ENCODE measurements at regions of chr12 and their contacts with region 1.

Region 1: DNA sequence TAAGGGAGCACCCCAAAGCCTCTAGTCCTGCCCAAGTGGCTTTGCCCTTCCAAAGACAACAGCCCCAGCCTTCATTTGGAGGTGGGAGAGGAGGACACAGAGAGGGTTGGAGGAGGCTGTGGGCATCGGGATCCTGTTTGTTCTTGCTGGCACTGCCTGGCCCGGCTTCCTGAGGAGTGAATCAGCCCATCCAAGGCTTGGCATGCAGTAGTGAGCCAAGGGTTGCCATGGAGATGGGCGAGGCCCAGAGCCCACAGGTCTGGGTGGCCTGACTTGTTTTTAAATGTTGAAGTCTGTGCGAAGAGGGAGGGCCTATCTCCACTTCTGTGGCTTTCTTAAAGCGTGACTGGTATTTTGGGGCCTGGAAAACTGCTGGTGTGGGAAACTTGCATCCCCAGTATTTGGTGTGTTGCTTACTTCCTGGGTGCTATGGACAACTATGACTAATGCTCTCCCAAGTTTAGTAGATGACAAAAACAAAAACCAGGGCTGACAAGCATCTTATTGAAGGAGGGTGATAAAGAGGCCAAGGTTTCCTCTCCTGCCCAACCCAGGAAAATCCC is 15.8 kb downstream of the CD9 start:
- DNase-seq: peak; percentile 100
- H3K4me3 ChIP-seq: peak overlapping the region in 1 of 3 experiments; percentile 1
- H3K27ac ChIP-seq: peak overlapping the region; percentile 100
- H3K4me1 ChIP-seq: peaks cover 77% of the 10 kb centered on the region
- H3K27me3 ChIP-seq: no peaks in the 10 kb centered on the region
- CTCF ChIP-seq: no peak

Region 2: GRCh38 chr12:5965950-5966383 is 250.0 kb before region 1 on chr12:
- CTCF ChIA-PET with region 1: no interaction called
- dilution Hi-C with region 1: no loop called
- in situ Hi-C with region 1: no loop called
- intact Hi-C with region 1: no loop called
- DNase-seq: peak; percentile 27
- H3K4me3 ChIP-seq: no peak overlapping the region
- H3K27ac ChIP-seq: no peak overlapping the region
- H3K4me1 ChIP-seq: no peaks in the 10 kb centered on the region
- H3K27me3 ChIP-seq: no peaks in the 10 kb centered on the region
- CTCF ChIP-seq: peak; percentile 82 to 87

Region 3: DNA sequence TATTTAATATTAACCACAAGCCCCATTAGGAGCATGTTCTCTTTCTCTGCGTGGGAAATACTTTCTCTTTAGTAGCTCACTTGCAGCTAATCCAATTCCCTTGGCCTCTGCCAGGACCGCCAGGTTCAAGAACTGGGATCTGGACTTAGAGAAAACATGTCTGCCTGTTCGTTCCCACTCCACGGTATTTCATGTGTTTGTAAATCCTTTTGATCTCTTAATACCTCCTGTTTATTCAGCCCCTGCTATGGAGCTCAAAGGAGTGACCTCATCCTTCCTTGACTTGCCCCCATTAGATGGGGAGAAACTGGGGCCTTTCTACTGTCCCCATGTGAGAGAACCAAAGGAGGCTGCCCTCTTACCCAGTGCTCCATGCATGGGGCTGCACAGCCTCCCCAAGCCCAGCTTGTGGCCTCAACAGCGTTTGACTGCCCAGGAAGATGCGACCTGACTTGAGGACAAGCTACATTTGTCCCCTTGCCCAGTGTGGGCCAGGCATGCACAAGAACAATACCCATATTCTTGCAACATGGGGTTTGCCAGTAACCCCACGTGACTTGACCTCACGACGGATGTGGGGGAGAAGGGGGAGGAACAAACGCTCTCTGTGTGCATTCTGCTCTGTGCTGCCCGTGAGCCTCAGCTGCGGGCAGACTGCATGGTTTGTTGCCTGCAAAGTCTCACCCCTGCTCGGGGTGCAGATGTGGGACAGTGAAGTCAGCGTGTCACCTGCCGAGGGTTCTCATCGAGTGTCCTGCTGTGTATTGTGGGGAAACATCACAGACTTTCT is 14.5 kb after region 1 on chr12:
- CTCF ChIA-PET with region 1: no interaction called
- dilution Hi-C with region 1: no loop called
- in situ Hi-C with region 1: no loop called
- intact Hi-C with region 1: loop called (anchors 2 kb)
- DNase-seq: peak; percentile 89
- H3K4me3 ChIP-seq: no peak overlapping the region
- H3K27ac ChIP-seq: peak overlapping the region; percentile 97
- H3K4me1 ChIP-seq: peaks cover 67% of the 10 kb centered on the region
- H3K27me3 ChIP-seq: no peaks in the 10 kb centered on the region
- CTCF ChIP-seq: no peak

Region 4: DNA sequence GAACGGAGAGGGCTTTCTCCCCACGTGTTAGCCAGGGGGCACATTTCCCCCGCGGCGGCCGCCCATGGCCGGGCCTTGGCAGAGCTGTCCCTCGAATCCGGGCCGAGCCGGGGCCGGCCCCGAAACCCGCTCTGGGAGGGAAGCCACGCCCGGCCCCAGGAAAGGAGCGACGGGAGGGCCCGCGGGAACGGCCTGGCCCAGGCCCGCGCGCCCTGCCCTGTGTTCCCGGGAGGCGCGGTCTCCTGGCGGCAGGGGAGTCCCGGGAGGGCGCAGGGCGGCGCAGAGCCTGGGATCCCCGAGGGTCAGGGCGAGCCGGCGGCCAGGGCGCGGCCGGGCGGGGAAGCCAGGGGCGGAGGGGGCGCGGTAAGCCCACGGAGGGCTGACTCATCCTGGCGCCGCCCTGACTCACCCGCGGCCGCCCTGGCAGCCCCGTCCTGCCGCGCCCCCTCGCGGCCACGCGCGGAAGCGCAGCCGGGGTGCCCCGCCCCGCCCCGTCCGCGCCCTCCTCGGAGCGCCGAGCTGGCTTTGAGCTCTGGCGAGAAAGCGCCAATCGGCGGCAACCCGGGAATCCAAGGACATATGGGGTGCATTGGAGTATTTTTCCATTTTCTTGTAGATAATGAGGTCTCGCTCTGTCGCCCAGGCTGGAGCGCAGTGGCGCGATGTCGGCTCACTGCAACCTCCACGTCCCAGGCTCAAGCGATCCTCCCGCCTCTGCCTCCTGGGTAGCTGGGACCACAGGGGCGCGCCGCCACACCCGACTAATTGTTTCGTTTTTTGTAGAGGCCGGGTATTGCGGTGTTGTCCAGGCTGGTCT is 62.6 kb after region 1 on chr12:
- CTCF ChIA-PET with region 1: no interaction called
- dilution Hi-C with region 1: no loop called
- in situ Hi-C with region 1: no loop called
- intact Hi-C with region 1: loop called (anchors 1 kb)
- DNase-seq: peak; percentile 93
- H3K4me3 ChIP-seq: peak overlapping the region; percentile 5 to 42 (median 38)
- H3K27ac ChIP-seq: peak overlapping the region; percentile 99
- H3K4me1 ChIP-seq: peaks cover 58% of the 10 kb centered on the region
- H3K27me3 ChIP-seq: no peaks in the 10 kb centered on the region
- CTCF ChIP-seq: peak; percentile 50 to 68

Region 5: DNA sequence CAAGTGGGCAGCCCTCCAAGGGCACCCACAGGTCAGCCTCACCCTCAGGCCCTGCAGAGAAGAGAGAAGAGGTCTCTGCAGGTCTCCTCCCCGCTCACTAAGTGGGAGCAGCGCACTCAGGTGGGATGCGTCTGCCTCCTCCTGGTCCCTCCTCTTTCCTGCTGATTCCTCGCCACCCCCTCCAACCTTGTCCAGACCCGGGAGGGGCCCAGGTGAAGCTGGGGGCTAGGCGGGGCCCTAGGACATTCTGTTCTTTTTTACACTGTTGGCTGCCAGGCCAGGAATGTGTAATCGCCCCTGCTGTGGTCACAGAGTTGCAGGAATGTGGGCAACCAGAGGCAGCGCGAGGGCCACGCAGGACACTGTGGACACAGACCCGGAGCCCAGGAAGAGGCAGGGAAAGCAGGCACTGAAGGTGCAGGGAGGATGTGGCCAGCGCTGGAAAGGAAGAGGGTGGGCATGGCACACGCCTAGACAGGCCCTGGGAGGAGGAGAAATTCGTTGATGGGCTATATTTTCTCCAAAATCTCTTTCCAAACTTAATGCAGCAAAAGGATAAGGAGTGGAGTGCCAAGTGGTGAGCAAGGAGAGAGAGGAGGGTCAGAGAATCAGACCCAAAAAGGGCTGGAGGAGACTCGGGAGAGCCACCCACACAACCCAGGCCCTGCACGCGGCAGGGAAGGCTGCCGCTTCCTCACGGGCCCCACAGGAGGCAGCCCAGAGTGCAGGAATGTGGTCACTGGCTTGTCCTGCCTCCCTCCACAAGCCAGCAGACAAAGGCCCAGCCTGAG is 160.3 kb after region 1 on chr12:
- CTCF ChIA-PET with region 1: no interaction called
- dilution Hi-C with region 1: no loop called
- in situ Hi-C with region 1: no loop called
- intact Hi-C with region 1: loop called (anchors 10 kb)
- DNase-seq: peak; percentile 90
- H3K4me3 ChIP-seq: peak overlapping the region; percentile 64 to 90 (median 87)
- H3K27ac ChIP-seq: peak overlapping the region; percentile 92
- H3K4me1 ChIP-seq: peaks cover 41% of the 10 kb centered on the region
- H3K27me3 ChIP-seq: no peaks in the 10 kb centered on the region
- CTCF ChIP-seq: peak; percentile 29 to 64

Region 6: GRCh38 chr12:6533923-6534694 is 318.1 kb after region 1 on chr12 and contains the start of gene GAPDH:
- CTCF ChIA-PET with region 1: no interaction called
- dilution Hi-C with region 1: no loop called
- in situ Hi-C with region 1: no loop called
- intact Hi-C with region 1: loop called (anchors 5 kb)
- DNase-seq: peak; percentile 97
- H3K4me3 ChIP-seq: peak within 1 kb of the TSS; percentile 64 to 92 (median 91)
- H3K27ac ChIP-seq: peak within 1 kb of the TSS; percentile 91
- H3K4me1 ChIP-seq: peaks cover 47% of the 10 kb centered on the region
- H3K27me3 ChIP-seq: no peaks in the 10 kb centered on the region
- CTCF ChIP-seq: no peak
- total RNA-seq, gene GAPDH: 6,493 to 13,434 TPM

Measured in mammary epithelial cell (primary cell).